ENCODE measurements at regions of chr2 and their contacts with region 1.

Region 1: GRCh38 chr2:70340921-70341765 is 39.3 kb upstream of the FAM136A start:
- DNase-seq: peak; percentile 53
- H3K4me3 ChIP-seq: no peak overlapping the region
- H3K27ac ChIP-seq: no peak overlapping the region
- H3K4me1 ChIP-seq: no peaks in the 10 kb centered on the region
- CTCF ChIP-seq: peak; percentile 94

Region 2: GRCh38 chr2:70616168-70616694 is 275.1 kb after region 1 on chr2:
- CTCF ChIA-PET with region 1: no interaction called
- POLR2A ChIA-PET with region 1: no interaction called
- intact Hi-C with region 1: loop called (anchors 1 kb)
- DNase-seq: no peak
- H3K4me3 ChIP-seq: no peak overlapping the region
- H3K27ac ChIP-seq: no peak overlapping the region
- H3K4me1 ChIP-seq: no peaks in the 10 kb centered on the region
- CTCF ChIP-seq: no peak

Region 3: DNA sequence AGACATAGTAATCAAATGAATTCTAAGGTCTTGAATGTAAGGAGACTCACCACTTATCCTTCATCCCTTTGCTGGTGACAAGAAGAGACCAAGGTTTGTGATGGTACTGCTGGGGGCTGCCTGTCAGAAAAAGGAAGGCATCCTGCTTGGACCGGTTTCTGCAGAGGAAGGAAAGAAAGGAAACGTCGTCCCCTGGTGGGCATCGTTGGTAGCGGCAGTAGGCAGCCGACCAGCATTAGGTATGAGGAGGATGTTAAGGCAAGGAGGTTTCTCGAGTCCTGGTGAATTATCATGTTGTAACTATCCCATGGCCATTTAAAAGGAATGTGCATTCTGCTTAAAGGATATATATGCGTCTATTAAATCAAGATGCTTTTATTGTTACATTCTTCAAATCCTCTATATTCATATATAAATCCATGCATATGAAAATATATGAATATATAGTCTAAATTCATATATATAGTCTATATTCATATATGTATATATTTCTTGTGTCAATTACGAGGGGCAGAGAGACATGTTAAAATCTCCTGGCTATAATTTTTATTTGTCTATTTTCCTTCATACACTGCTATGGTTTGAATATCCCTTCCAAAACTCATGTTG is 306.8 kb after region 1 on chr2:
- CTCF ChIA-PET with region 1: no interaction called
- POLR2A ChIA-PET with region 1: interaction called, 5 read pairs
- intact Hi-C with region 1: loop called (anchors 1 kb)
- DNase-seq: peak; percentile 55
- H3K4me3 ChIP-seq: no peak overlapping the region
- H3K27ac ChIP-seq: no peak overlapping the region
- H3K4me1 ChIP-seq: no peaks in the 10 kb centered on the region
- CTCF ChIP-seq: peak; percentile 95